Naive thymus-derived CD4-positive, alpha-beta T cell (primary cell): ENCODE measurements at regions of chr1 and their contacts with region 1.

Region 1: DNA sequence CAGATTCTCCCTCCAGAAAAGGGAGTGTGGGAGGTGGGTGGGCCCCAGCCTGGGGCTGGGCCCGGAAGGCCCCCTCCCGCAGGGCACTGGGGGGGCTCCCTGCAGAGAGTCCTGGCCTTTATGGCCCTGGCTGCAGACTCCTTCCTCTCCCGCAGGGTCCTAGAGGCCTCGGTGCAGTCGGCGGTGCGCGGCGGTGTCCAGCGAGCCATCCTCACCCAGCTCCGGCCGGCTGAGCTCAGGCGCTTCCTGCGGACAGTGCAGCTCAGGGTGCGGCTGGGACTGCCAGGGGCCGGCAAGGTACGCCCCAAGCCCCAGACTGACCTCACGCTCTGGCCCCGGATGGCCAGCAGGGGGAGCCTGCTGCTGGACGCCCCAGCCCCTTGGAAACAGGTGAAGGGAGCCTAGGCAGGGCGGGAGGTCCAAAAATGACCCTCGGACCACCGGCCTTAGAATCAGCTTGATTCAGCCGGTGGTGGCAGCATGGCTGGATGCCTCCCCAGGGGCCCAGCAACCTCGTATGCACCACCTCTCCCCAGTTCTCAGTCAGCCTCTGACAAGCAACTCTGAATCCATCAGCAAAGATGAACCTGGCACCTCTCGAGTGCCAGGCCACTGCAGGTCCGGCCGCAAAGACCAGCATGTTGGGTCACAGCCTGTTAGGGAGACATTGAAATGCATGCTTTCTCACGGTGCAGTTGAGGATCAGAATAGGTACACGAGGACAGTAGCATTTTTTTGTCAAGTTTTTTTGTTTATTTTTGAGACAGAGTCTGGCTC is 20.6 kb downstream of the MTHFR start:
- DNase-seq: peak in 7 of 9 donors; percentile 11 to 60 (median 17)
- ATAC-seq: peak; percentile 81
- H3K4me3 ChIP-seq: peak overlapping the region; percentile 37
- H3K4me3 Mint-ChIP-seq: peak overlapping the region in 8 of 10 donors; percentile 29 to 70 (median 57)
- H3K27ac ChIP-seq: no peak overlapping the region
- H3K27ac Mint-ChIP-seq: peak overlapping the region in 3 of 9 donors; percentile 11 to 49 (median 31)
- H3K4me1 ChIP-seq: peaks cover 4 to 11% of the 10 kb centered on the region in 2 donors
- H3K4me1 Mint-ChIP-seq: peaks cover 4 to 9% (median 6%) of the 10 kb centered on the region in 7 donors
- H3K27me3 ChIP-seq: no peaks in the 10 kb centered on the region
- H3K27me3 Mint-ChIP-seq: no peaks in the 10 kb centered on the region

Region 2: GRCh38 chr1:11531314-11531870 is 253.8 kb before region 1 on chr1:
- CTCF ChIA-PET with region 1: no interaction called
- POLR2A ChIA-PET with region 1: no interaction called
- intact Hi-C with region 1: no loop called
- DNase-seq: no peak
- ATAC-seq: no peak
- H3K4me3 ChIP-seq: no peak overlapping the region
- H3K4me3 Mint-ChIP-seq: no peak overlapping the region
- H3K27ac ChIP-seq: no peak overlapping the region
- H3K27ac Mint-ChIP-seq: no peak overlapping the region
- H3K4me1 ChIP-seq: no peaks in the 10 kb centered on the region
- H3K4me1 Mint-ChIP-seq: no peaks in the 10 kb centered on the region
- H3K27me3 ChIP-seq: no peaks in the 10 kb centered on the region
- H3K27me3 Mint-ChIP-seq: no peaks in the 10 kb centered on the region

Region 3: GRCh38 chr1:11893907-11894251 is 108.7 kb after region 1 on chr1:
- CTCF ChIA-PET with region 1: interaction called, 4 read pairs
- POLR2A ChIA-PET with region 1: no interaction called
- intact Hi-C with region 1: loop called in 1 of 2 experiments (anchors 2 kb)
- DNase-seq: peak; percentile 41 to 77 (median 61)
- ATAC-seq: peak; percentile 91
- H3K4me3 ChIP-seq: no peak overlapping the region
- H3K4me3 Mint-ChIP-seq: peak overlapping the region in 1 of 10 donors; percentile 2
- H3K27ac ChIP-seq: no peak overlapping the region
- H3K27ac Mint-ChIP-seq: peak overlapping the region in 2 of 9 donors; percentile 25 to 54
- H3K4me1 ChIP-seq: no peaks in the 10 kb centered on the region
- H3K4me1 Mint-ChIP-seq: peaks cover 0 to 4% (median 0%) of the 10 kb centered on the region in 7 donors
- H3K27me3 ChIP-seq: peaks cover 0 to 4% of the 10 kb centered on the region in 2 donors
- H3K27me3 Mint-ChIP-seq: peaks cover 20 to 49% (median 31%) of the 10 kb centered on the region in 5 donors